Mammary epithelial cell (primary cell): ENCODE measurements at regions of chr19 and their contacts with region 1.

Region 1: GRCh38 chr19:57362997-57363705 is at the starts of genes TRAPPC2B and ZNF547:
- DNase-seq: peak; percentile 100
- H3K4me3 ChIP-seq: peak within 1 kb of the TSS; percentile 60 to 95 (median 66)
- H3K27ac ChIP-seq: peak within 1 kb of the TSS; percentile 71
- H3K4me1 ChIP-seq: peaks cover 4% of the 10 kb centered on the region
- H3K27me3 ChIP-seq: no peaks in the 10 kb centered on the region
- CTCF ChIP-seq: no peak
- total RNA-seq, gene TRAPPC2B: 4.9 to 9.3 TPM
- total RNA-seq, gene ZNF547: 2.3 to 4.3 TPM

Region 2: DNA sequence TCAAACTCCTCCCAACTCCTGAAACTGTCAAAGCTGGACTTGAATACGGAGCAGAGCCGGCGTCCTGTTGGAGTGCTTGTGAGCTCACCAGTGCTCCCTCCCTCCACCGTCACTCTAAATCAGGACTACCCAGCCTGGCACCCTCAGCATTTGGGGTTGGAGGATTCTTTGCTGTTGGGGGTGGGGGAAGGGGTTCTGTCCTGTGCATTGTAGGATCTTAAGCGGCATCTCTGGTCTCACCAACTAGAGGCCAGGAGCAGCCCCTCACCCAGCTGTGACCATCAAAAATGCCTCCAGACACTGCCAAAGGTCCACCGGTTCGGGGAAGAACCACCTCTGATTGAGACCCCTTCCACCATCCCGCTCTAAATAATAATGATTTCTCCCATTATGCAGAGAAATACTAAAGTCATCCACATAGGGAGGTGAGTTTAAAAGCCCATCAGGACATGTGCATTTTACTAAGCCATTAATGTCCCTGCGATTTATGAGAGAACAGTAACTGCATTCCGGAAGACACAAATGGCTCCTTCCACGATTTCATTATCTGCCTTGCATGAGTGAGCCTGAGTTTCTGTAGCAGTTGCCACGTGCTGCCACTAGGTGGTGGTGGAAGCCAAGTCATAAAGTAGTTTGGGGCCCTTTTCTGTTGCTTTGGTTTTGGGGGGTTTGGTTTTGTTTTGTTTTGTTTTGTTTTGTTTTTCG is 259.4 kb before region 1 on chr19:
- CTCF ChIA-PET with region 1: no interaction called
- dilution Hi-C with region 1: loop called (anchors 10 kb)
- in situ Hi-C with region 1: no loop called
- intact Hi-C with region 1: no loop called
- DNase-seq: peak; percentile 46
- H3K4me3 ChIP-seq: peak overlapping the region; percentile 11 to 25 (median 17)
- H3K27ac ChIP-seq: no peak overlapping the region
- H3K4me1 ChIP-seq: peaks cover 6% of the 10 kb centered on the region
- H3K27me3 ChIP-seq: no peaks in the 10 kb centered on the region
- CTCF ChIP-seq: peak; percentile 90 to 91

Region 3: DNA sequence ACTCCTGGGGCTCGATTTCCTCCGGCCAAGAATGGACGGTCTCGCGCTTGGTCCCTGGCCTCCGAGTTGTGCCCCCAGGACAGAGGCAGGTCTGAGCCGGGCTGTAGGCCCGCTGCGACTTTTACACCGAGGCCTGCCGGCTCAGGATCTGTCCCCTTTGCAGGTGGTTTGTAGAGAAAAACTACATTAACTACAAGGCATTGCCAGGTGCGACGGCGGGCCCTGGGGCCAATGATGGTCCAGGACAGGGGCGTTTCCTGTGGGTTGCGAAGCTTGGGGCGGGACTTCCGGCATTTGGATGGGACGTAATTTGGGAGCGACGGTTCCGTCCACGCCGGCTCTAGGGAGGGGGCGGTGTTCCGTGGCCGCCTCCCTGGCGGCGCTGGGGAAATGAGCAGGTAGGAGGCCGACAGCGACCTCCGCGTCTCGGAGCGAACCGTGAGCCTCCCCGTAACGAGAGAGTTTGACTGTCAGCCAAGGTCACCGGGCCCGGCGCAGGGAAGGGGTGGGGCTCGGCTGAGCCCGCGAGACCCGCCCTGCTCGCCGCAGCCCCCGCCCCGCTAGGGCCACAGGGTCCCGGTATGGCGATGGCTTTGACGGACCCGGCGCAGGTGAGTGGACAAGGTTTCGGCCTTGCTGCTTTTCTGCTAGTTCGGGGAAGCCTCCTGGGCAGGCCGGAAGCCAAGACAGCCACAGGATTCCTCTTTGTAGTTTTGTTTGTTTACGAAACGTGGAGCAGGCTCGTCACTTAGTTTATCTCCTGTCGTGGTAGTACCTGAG is 122.7 kb before region 1 on chr19 and contains the start of gene ZNF805:
- CTCF ChIA-PET with region 1: no interaction called
- dilution Hi-C with region 1: no loop called
- in situ Hi-C with region 1: no loop called
- intact Hi-C with region 1: loop called (anchors 2 kb)
- DNase-seq: peak; percentile 92
- H3K4me3 ChIP-seq: peak within 1 kb of the TSS; percentile 62 to 94 (median 81)
- H3K27ac ChIP-seq: peak within 1 kb of the TSS; percentile 87
- H3K4me1 ChIP-seq: peaks cover 15% of the 10 kb centered on the region
- H3K27me3 ChIP-seq: no peaks in the 10 kb centered on the region
- CTCF ChIP-seq: peak in 1 of 2 donors; percentile 3
- total RNA-seq, gene ZNF805: 13.5 to 37.5 TPM

Region 4: DNA sequence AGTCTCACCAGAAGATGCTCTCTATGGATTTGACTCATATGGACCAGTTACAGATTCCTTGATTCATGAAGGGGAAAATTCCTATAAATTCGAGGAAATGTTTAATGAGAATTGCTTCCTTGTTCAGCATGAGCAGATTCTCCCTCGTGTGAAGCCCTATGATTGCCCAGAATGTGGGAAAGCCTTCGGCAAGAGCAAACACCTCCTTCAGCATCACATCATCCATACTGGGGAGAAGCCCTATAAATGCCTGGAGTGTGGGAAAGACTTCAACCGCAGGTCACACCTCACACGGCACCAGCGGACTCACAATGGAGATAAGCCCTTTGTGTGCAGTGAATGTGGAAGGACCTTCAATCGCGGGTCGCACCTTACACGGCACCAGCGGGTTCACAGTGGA is 72.2 kb before region 1 on chr19:
- CTCF ChIA-PET with region 1: no interaction called
- dilution Hi-C with region 1: no loop called
- in situ Hi-C with region 1: no loop called
- intact Hi-C with region 1: no loop called
- DNase-seq: no peak
- H3K4me3 ChIP-seq: no peak overlapping the region
- H3K27ac ChIP-seq: no peak overlapping the region
- H3K4me1 ChIP-seq: no peaks in the 10 kb centered on the region
- H3K27me3 ChIP-seq: no peaks in the 10 kb centered on the region
- CTCF ChIP-seq: no peak

Region 5: DNA sequence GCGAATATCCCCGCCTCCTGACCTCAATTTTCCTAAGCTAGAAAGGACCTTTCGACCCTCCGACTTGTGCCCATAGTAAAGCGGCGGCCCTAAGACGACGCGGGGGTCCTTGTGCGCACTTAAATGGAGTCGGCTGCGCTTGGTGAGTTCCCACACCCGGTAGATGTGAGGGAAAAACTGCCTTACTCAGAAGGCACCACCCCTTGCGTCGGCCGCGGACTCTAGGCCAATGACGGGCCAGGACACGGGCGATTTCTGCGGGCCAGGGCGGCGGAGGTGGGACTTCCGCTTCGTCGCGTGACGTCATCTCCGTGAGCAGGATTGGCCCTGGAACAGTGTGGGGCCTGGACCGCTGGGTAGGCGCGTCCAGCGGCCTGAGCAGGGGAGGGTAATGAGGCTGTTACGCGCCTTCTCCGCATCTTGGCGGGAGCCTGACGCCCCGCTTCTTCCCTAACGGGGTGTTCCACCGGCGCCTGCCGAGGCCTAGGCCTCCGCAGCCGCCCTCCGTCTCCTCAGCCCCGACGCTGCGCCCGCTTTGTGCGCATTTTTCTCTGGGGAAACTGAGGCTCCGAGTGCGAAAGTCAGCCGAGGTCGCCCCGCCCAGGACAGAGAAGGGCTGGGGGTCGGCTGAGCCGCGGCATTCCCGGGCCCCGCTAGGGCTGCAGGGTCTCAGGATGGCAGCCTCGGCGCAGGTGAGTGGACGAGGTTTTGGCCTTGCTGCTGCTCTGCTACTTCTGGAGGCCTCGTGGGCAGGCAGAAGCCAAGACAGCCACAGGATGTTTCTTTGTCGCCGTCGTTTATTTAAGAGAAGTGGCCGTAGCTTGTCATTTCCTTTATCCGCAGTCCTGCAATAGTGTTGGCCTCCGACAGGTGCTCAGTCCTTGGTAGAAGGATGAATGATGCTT is 42.7 kb before region 1 on chr19 and contains the start of gene ZNF543:
- CTCF ChIA-PET with region 1: no interaction called
- dilution Hi-C with region 1: no loop called
- in situ Hi-C with region 1: no loop called
- intact Hi-C with region 1: loop called (anchors 2 kb)
- DNase-seq: peak; percentile 96
- H3K4me3 ChIP-seq: peak within 1 kb of the TSS; percentile 81 to 96 (median 90)
- H3K27ac ChIP-seq: peak within 1 kb of the TSS; percentile 72
- H3K4me1 ChIP-seq: peaks cover 14% of the 10 kb centered on the region
- H3K27me3 ChIP-seq: no peaks in the 10 kb centered on the region
- CTCF ChIP-seq: peak in 1 of 2 donors; percentile 4
- total RNA-seq, gene ZNF543: 7.4 to 15.2 TPM

Region 6: DNA sequence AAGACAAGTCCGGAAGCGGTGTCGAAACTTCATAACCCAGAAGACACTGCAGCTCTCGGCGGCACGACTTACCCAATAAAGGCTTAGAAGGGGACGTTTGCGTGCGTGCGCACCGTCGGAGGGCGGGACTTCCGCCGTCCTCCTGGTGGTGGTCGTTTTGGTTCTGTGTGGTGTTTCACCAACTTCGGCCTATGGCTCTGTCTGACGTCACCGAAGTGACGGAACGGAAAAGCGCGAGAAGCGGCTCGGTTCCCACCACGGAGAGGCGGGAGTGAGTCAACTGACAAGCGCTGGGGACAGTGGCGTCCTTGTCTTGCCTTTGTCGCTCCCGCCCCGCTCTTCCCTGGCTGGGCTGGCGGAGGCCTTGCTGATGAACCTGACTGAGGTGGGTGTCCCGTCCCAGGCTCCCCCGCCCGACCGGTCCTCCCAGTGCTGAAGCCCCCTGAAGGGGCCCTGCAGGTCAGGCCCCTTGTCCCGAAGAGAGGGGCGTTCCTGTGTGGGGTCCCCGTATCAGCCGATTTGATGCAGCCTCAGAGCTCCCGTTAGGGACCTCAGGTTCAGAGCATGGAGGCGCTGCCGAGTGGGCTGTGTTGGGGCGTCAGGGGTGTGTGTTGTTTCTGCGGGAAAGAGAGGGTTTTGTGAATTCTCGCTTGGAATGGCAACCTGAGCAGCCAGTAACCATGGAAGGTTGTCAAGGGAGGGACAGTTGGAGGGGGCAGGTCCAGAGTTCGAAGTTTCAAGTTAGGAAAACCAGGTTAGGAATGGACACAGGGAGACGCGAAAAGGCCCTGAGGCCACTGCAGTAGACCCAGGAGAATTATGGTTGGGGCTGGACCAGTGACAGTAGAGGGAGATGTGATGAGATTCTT is 26.8 kb after region 1 on chr19 and contains the start of gene ZNF548:
- CTCF ChIA-PET with region 1: no interaction called
- dilution Hi-C with region 1: no loop called
- in situ Hi-C with region 1: no loop called
- intact Hi-C with region 1: loop called (anchors 1 kb)
- DNase-seq: peak; percentile 96
- H3K4me3 ChIP-seq: peak within 1 kb of the TSS; percentile 83 to 88 (median 84)
- H3K27ac ChIP-seq: peak within 1 kb of the TSS; percentile 88
- H3K4me1 ChIP-seq: peaks cover 9% of the 10 kb centered on the region
- H3K27me3 ChIP-seq: no peaks in the 10 kb centered on the region
- CTCF ChIP-seq: peak in 1 of 2 donors; percentile 30
- total RNA-seq, gene ZNF548: 15.2 to 25.8 TPM

Region 7: DNA sequence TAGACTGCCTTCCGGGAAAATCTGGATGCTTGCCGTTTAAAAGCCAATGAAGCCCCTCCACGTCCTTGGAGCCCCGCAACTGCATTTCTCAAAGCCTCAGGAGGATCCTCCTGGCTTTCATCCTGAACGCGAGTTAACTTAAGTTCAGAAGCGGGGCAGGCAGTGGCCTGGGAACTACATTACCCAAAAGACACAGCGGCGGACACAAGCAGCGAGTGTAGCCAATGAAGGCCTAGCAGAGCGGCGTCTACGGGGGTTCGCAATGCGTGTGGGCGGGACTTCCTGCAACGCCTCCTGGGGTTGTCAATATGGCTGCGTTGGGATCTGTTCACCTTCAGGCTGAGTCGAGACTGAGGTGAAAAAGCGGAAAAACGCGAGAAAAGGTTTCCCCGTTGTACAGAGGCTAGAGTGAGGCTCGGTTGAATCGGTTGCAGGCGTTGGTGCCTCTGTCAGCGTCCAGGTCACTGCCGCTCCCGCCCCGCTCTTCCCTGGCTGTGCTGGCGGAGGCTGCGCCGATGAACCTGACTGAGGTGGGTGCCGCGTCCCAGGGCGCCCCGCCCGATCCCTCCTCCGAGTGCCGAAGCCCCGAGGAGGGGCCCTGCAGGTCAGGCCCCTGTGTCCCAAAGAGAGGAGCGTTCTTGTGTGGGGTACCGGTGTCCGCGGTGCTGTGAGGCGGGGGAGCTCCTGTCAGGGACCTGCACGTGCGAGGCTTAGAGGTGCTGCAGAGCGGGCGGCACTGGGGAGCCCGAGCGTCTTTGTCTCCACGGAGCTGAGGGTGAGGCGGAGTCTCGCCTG is 47.9 kb after region 1 on chr19 and contains the start of gene ZNF17:
- CTCF ChIA-PET with region 1: no interaction called
- dilution Hi-C with region 1: no loop called
- in situ Hi-C with region 1: no loop called
- intact Hi-C with region 1: no loop called
- DNase-seq: peak; percentile 91
- H3K4me3 ChIP-seq: peak within 1 kb of the TSS; percentile 75 to 88 (median 87)
- H3K27ac ChIP-seq: peak within 1 kb of the TSS; percentile 30
- H3K4me1 ChIP-seq: no peaks in the 10 kb centered on the region
- H3K27me3 ChIP-seq: no peaks in the 10 kb centered on the region
- CTCF ChIP-seq: no peak
- total RNA-seq, gene ZNF17: 6.0 to 13.8 TPM